PC-9 (cell line): ENCODE measurements at regions of chr16 and their contacts with region 1.

Region 1: DNA sequence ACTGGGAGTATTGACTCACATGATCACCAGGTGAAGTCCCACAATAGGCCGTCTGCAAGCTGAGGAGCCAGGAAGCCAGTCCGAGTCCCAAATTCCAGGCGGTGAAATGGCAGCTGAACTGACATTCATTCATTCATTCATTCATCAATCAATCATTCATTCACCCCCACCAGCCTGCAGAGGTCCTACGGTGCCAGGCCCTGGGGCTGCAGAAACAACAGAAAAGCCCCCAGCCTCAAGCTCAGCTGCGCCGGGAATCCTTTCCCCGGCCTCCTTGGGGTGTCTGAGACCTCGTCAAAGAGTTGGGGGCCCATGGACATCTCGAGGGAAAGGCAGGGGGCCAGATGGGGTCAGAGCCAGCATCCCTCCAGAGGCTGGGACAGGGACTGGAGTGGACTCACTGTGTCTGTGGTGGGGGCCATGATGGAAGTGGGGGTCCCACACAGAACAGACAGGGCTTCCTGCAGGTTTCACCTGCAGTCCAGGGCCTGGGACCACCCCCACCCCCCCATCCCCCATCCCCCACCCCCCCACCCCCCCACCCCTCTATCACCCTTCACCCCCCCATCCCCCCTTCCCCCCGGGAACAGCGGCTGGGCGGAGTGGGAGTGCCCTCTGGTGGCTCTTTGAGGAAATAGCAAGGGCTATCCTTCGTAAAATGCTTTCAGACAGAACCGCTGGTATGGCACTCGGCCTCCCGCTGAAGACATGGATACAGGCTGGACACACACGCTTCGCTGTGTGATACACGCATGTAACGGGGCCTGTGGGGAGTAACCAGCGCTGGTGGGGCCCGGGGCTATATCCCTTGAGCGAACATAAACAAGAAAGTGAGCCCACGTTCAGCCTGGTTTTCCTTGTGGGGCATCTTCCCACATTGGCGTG is 8.5 kb upstream of the ZC3H18 start:
- DNase-seq: peak in 1 of 2 experiments; percentile 60
- H3K4me3 ChIP-seq: peak overlapping the region; percentile 26; the same call in 1 of the 2 replicates
- H3K27ac ChIP-seq: no peak overlapping the region
- H3K4me1 ChIP-seq: no peaks in the 10 kb centered on the region
- H3K27me3 ChIP-seq: peaks cover 17% of the 10 kb centered on the region
- CTCF ChIP-seq: peak; percentile 67

Region 2: DNA sequence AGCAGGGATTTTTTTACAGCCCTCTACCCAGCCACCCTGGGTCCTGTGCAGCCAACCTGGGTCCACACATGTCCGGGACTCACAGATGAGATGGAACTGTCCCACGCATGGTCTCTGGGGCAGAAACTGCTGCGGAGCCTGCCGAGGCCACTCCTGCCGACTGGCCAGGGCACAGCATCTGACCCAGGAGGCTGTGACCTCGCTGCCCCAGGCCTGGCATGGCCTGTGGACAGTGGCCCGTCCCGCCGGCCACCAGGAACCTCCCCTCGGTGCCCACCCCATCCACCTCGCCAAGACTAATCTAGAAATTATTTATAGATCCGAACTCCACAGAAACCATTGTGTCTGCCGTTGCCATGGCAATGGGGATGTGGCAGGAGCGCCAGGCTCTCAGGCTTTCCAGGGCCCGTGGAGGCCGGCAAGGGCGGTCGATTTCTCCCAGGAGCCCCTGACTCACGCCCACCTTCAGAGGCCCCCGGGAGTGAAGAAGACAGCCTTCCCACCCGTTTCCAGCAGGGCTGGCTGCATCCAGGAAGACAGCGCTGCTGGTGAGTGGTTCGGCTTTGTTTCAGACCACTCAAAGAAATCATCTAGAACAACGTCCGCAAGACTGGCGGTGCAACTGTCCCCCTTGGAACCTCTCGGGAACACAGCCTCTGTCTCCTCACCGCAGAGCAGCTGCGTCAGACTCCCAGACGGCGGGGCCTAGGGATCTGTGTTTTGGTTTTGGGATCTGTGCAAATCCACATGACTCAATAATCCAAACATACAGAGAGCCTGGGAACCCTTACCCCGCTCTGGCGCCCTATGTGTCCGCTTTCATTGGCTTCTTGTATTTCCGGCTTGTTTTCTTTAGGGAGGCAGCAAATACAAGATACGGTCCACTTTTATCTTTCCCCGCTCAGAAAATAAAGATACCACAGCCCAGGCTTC is 1020.5 kb before region 1 on chr16:
- CTCF ChIA-PET with region 1: interaction called, 10 read pairs
- POLR2A ChIA-PET with region 1: no interaction called
- intact Hi-C with region 1: no loop called
- DNase-seq: no peak
- H3K4me3 ChIP-seq: no peak overlapping the region
- H3K27ac ChIP-seq: no peak overlapping the region
- H3K4me1 ChIP-seq: no peaks in the 10 kb centered on the region
- H3K27me3 ChIP-seq: peaks cover 100% of the 10 kb centered on the region
- CTCF ChIP-seq: no peak

Region 3: DNA sequence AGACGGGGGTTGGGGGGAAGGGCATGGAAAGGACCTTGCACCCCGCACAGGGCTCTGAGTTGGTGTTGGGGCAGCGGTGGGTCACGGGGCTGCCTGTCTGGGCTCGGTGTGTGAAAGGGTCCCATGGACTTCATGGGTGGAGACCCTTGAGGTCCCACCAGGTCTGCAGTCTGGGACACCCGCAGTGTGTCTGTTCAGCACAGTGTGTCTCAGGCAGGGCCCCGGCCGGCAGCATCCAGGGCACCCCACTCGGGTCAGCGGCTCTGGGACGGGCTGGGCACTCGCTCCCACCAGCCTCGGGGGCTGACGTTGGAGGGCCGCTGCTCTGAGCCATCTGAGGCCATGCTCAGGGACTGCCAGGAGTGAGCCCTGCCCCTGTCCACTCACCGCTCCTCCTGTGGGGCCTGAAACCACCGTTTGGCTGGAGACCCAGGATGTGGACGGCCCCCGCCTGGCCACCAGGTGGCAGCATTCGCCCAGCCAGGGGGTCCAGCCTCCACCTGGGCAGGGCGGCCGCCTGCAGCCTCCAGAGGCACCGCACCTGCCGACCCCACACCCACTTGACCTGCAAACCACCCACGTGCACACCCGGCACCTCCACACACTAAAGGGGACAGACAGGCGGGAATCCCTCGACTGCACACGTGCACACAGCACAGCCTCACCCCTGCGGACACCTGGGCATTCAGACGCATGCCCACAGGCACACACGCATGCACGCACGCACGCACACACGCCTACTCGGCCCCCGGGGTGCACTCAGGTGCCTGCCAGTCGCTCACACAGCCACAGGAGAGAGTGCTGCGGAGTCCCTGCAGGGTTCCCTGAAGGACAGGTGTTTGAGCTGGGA is 118.8 kb before region 1 on chr16:
- CTCF ChIA-PET with region 1: no interaction called
- POLR2A ChIA-PET with region 1: no interaction called
- intact Hi-C with region 1: loop called (anchors 1 kb)
- DNase-seq: peak; percentile 64 to 91
- H3K4me3 ChIP-seq: no peak overlapping the region
- H3K27ac ChIP-seq: no peak overlapping the region
- H3K4me1 ChIP-seq: no peaks in the 10 kb centered on the region
- H3K27me3 ChIP-seq: peaks cover 25% of the 10 kb centered on the region
- CTCF ChIP-seq: peak; percentile 92

Region 4: GRCh38 chr16:88479793-88480760 is 81.7 kb before region 1 on chr16:
- CTCF ChIA-PET with region 1: no interaction called
- POLR2A ChIA-PET with region 1: no interaction called
- intact Hi-C with region 1: no loop called
- DNase-seq: no peak
- H3K4me3 ChIP-seq: no peak overlapping the region
- H3K27ac ChIP-seq: no peak overlapping the region
- H3K4me1 ChIP-seq: no peaks in the 10 kb centered on the region
- H3K27me3 ChIP-seq: no peaks in the 10 kb centered on the region
- CTCF ChIP-seq: no peak

Region 5: GRCh38 chr16:88502371-88502770 is 59.4 kb before region 1 on chr16:
- CTCF ChIA-PET with region 1: interaction called, 10 read pairs
- POLR2A ChIA-PET with region 1: no interaction called
- intact Hi-C with region 1: no loop called
- DNase-seq: no peak
- H3K4me3 ChIP-seq: no peak overlapping the region
- H3K27ac ChIP-seq: no peak overlapping the region
- H3K4me1 ChIP-seq: no peaks in the 10 kb centered on the region
- H3K27me3 ChIP-seq: no peaks in the 10 kb centered on the region
- CTCF ChIP-seq: no peak

Region 6: GRCh38 chr16:89084814-89085612 is 523.3 kb after region 1 on chr16:
- CTCF ChIA-PET with region 1: interaction called, 15 read pairs
- POLR2A ChIA-PET with region 1: no interaction called
- intact Hi-C with region 1: no loop called
- DNase-seq: no peak
- H3K4me3 ChIP-seq: no peak overlapping the region
- H3K27ac ChIP-seq: no peak overlapping the region
- H3K4me1 ChIP-seq: no peaks in the 10 kb centered on the region
- H3K27me3 ChIP-seq: peaks cover 88% of the 10 kb centered on the region
- CTCF ChIP-seq: no peak